Activated CD4-positive, alpha-beta T cell treated with anti-CD3 and anti-CD28 coated beads for 36 hours (primary cell): ENCODE measurements at regions of chr2 and their contacts with region 1.

Region 1: GRCh38 chr2:68441179-68441993 is 25.7 kb downstream of the FBXO48 start:
- DNase-seq: peak; percentile 92
- ATAC-seq: peak; percentile 98
- H3K4me3 Mint-ChIP-seq: no peak overlapping the region
- H3K27ac Mint-ChIP-seq: no peak overlapping the region
- H3K4me1 Mint-ChIP-seq: peaks cover 14% of the 10 kb centered on the region
- H3K27me3 Mint-ChIP-seq: peaks cover 2% of the 10 kb centered on the region

Region 2: DNA sequence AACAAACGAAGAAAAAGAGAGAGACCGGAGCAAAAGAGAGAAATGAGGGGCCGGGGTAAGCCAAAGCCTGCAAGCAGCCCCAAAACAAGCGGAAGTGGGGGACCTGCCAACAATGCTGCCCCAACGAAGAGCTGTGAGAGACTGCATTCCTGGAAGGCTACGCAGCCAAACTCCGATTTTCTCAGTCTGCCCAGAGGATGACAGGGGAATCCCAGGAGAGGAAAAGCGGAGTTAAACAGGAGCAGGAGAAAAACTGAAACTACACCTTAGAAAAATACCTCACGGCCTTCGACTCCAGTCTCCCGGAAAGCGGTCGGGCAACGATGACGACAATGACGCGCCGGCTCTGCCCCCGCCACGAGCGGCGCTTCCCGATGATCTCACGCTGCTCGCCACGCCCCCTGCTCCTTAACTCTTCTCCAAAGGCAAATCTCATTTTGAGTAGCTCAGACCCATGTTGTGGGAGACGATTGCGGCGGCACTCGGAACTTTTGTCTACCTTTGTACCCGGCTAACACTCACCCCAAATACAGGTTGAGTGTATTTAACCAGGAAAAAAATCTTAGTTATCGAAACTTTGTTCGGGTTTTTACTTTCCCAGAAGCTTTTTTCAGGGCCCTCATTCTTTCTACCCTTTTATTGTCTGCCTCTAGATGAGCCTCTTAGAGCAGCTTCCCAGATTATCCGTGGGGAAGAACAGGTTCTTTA is 378.6 kb before region 1 on chr2 and contains the start of gene C1D:
- CTCF ChIA-PET with region 1: no interaction called
- POLR2A ChIA-PET with region 1: no interaction called
- intact Hi-C with region 1: loop called in 1 of 2 experiments (anchors 1 kb)
- DNase-seq: peak; percentile 96
- ATAC-seq: peak; percentile 92
- H3K4me3 Mint-ChIP-seq: peak within 1 kb of the TSS; percentile 89
- H3K27ac Mint-ChIP-seq: peak within 1 kb of the TSS; percentile 95
- H3K4me1 Mint-ChIP-seq: peaks cover 28% of the 10 kb centered on the region
- H3K27me3 Mint-ChIP-seq: no peaks in the 10 kb centered on the region
- total RNA-seq, gene C1D: 11.3 to 21.4 TPM

Region 3: DNA sequence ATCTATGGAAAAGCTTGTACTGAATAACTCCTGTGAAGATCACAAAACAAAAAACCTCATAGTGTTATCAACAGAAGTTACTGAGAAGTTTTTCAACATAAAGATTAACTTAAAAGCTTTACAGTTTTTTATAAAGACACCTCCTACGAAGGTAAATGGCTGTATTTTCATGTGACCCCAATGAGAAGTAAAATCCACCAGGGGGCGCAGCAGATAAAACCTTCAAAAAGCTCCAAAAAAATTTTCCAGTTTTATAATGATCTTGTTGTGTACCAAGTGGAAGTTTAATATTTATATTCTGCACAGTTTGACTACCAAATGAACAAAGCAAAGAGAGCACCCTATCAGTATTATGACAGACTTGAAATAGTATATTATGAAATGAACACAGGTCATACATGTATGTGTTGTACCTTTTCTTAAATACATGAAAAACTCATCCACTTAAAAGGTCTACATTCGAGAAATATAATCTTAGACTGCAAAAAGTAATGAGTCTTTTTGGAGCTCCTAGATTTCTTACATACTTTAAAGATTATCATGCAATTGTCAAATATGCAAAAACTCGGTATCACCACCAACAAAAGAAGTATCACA is 245.2 kb before region 1 on chr2:
- CTCF ChIA-PET with region 1: interaction called, 3 read pairs
- POLR2A ChIA-PET with region 1: no interaction called
- intact Hi-C with region 1: loop called in 1 of 2 experiments (anchors 1 kb)
- DNase-seq: peak; percentile 57
- ATAC-seq: no peak
- H3K4me3 Mint-ChIP-seq: no peak overlapping the region
- H3K27ac Mint-ChIP-seq: no peak overlapping the region
- H3K4me1 Mint-ChIP-seq: peaks cover 52% of the 10 kb centered on the region
- H3K27me3 Mint-ChIP-seq: no peaks in the 10 kb centered on the region

Region 4: GRCh38 chr2:68362069-68362468 is 79.3 kb before region 1 on chr2:
- CTCF ChIA-PET with region 1: interaction called, 37 read pairs
- POLR2A ChIA-PET with region 1: no interaction called
- intact Hi-C with region 1: loop called (anchors 1 kb)
- DNase-seq: peak; percentile 91
- ATAC-seq: peak; percentile 92
- H3K4me3 Mint-ChIP-seq: peak overlapping the region; percentile 17
- H3K27ac Mint-ChIP-seq: peak overlapping the region; percentile 40
- H3K4me1 Mint-ChIP-seq: peaks cover 11% of the 10 kb centered on the region
- H3K27me3 Mint-ChIP-seq: peaks cover 15% of the 10 kb centered on the region

Region 5: GRCh38 chr2:68385220-68385906 is 56.0 kb before region 1 on chr2:
- CTCF ChIA-PET with region 1: interaction called, 9 read pairs
- POLR2A ChIA-PET with region 1: no interaction called
- intact Hi-C with region 1: loop called in 1 of 2 experiments (anchors 1 kb)
- DNase-seq: peak; percentile 59
- ATAC-seq: peak; percentile 74
- H3K4me3 Mint-ChIP-seq: no peak overlapping the region
- H3K27ac Mint-ChIP-seq: no peak overlapping the region
- H3K4me1 Mint-ChIP-seq: peaks cover 35% of the 10 kb centered on the region
- H3K27me3 Mint-ChIP-seq: no peaks in the 10 kb centered on the region

Region 6: GRCh38 chr2:68537809-68538208 is 96.4 kb after region 1 on chr2:
- CTCF ChIA-PET with region 1: no interaction called
- POLR2A ChIA-PET with region 1: no interaction called
- intact Hi-C with region 1: no loop called
- DNase-seq: peak; percentile 15
- ATAC-seq: no peak
- H3K4me3 Mint-ChIP-seq: no peak overlapping the region
- H3K27ac Mint-ChIP-seq: no peak overlapping the region
- H3K4me1 Mint-ChIP-seq: peaks cover 2% of the 10 kb centered on the region
- H3K27me3 Mint-ChIP-seq: no peaks in the 10 kb centered on the region

Region 7: GRCh38 chr2:69067026-69067630 is 625.7 kb after region 1 on chr2:
- CTCF ChIA-PET with region 1: no interaction called
- POLR2A ChIA-PET with region 1: no interaction called
- intact Hi-C with region 1: no loop called
- DNase-seq: no peak
- ATAC-seq: no peak
- H3K4me3 Mint-ChIP-seq: no peak overlapping the region
- H3K27ac Mint-ChIP-seq: no peak overlapping the region
- H3K4me1 Mint-ChIP-seq: no peaks in the 10 kb centered on the region
- H3K27me3 Mint-ChIP-seq: peaks cover 21% of the 10 kb centered on the region